ENCODE measurements at regions of chr3 and their contacts with region 1.

Region 1: GRCh38 chr3:169966428-169966950 is at the start of gene SEC62:
- DNase-seq: peak; percentile 97
- H3K4me3 Mint-ChIP-seq: peak within 1 kb of the TSS; percentile 80
- H3K27ac Mint-ChIP-seq: peak within 1 kb of the TSS; percentile 96
- H3K4me1 Mint-ChIP-seq: peaks cover 59% of the 10 kb centered on the region
- H3K27me3 Mint-ChIP-seq: no peaks in the 10 kb centered on the region
- total RNA-seq, gene SEC62: 59.7 to 60.7 TPM

Region 2: GRCh38 chr3:169812332-169813235 is 153.9 kb before region 1 on chr3 and contains the starts of genes LRRC34 and LRRIQ4:
- CTCF ChIA-PET with region 1: interaction called, 5 read pairs
- POLR2A ChIA-PET with region 1: no interaction called
- intact Hi-C with region 1: loop called (anchors 1 kb)
- DNase-seq: peak; percentile 88
- H3K4me3 Mint-ChIP-seq: peak within 1 kb of the TSS; percentile 75
- H3K27ac Mint-ChIP-seq: peak within 1 kb of the TSS; percentile 43
- H3K4me1 Mint-ChIP-seq: peaks cover 19% of the 10 kb centered on the region
- H3K27me3 Mint-ChIP-seq: no peaks in the 10 kb centered on the region
- total RNA-seq, gene LRRC34: 2.8 to 2.9 TPM
- total RNA-seq, gene LRRIQ4: 0.14 TPM in 1 of 2 experiments, not detected in the other

Region 3: DNA sequence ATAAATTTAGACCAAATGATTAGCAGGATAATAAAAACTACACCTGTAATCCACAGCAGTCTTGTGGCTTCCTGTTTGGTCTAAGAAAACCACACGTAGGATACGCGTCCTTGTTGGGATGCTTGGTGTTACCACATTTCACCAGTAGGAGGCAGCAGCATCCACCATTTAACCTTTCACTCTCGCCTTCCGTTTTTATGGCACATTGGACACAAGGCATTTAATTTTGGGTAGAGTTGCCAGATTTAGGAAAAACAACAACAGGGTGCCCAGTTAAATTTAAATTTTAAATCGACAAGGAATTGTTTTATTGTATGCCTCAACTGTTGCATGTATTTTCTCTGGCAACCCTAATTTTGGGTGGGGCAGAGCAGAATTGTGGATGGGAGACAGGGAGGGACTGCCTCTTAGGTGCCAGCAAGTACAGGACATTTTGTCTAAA is 103.0 kb before region 1 on chr3:
- CTCF ChIA-PET with region 1: interaction called, 4 read pairs
- POLR2A ChIA-PET with region 1: no interaction called
- intact Hi-C with region 1: loop called (anchors 1 kb)
- DNase-seq: peak; percentile 79
- H3K4me3 Mint-ChIP-seq: no peak overlapping the region
- H3K27ac Mint-ChIP-seq: no peak overlapping the region
- H3K4me1 Mint-ChIP-seq: peaks cover 8% of the 10 kb centered on the region
- H3K27me3 Mint-ChIP-seq: peaks cover 10% of the 10 kb centered on the region

Region 4: GRCh38 chr3:170027233-170028102 is 61.0 kb after region 1 on chr3:
- CTCF ChIA-PET with region 1: no interaction called
- POLR2A ChIA-PET with region 1: no interaction called
- intact Hi-C with region 1: loop called (anchors 2 kb)
- DNase-seq: peak; percentile 59
- H3K4me3 Mint-ChIP-seq: no peak overlapping the region
- H3K27ac Mint-ChIP-seq: peak overlapping the region; percentile 72
- H3K4me1 Mint-ChIP-seq: peaks cover 23% of the 10 kb centered on the region
- H3K27me3 Mint-ChIP-seq: no peaks in the 10 kb centered on the region

Region 5: GRCh38 chr3:170037463-170038433 is 71.3 kb after region 1 on chr3 and contains the start of gene GPR160:
- CTCF ChIA-PET with region 1: interaction called, 6 read pairs
- POLR2A ChIA-PET with region 1: no interaction called
- intact Hi-C with region 1: loop called (anchors 2 kb)
- DNase-seq: peak; percentile 89
- H3K4me3 Mint-ChIP-seq: peak within 1 kb of the TSS; percentile 82
- H3K27ac Mint-ChIP-seq: no peak within 1 kb of the TSS
- H3K4me1 Mint-ChIP-seq: peaks cover 14% of the 10 kb centered on the region
- H3K27me3 Mint-ChIP-seq: no peaks in the 10 kb centered on the region
- total RNA-seq, gene GPR160: 5.7 to 7.0 TPM